Heart left ventricle (tissue), 16 donors: ENCODE measurements at regions of chr13 and their contacts with region 1.

Region 1: GRCh38 chr13:85806553-85807175 is 7.4 kb upstream of the SLITRK6 start:
- DNase-seq: no peak
- ATAC-seq: no peak
- H3K4me3 ChIP-seq: no peak overlapping the region
- H3K27ac ChIP-seq: no peak overlapping the region
- H3K4me1 ChIP-seq: no peaks in the 10 kb centered on the region
- H3K27me3 ChIP-seq: no peaks in the 10 kb centered on the region
- CTCF ChIP-seq: peak; percentile 32 to 68 (median 52)
- POLR2A ChIP-seq: no peak

Region 2: DNA sequence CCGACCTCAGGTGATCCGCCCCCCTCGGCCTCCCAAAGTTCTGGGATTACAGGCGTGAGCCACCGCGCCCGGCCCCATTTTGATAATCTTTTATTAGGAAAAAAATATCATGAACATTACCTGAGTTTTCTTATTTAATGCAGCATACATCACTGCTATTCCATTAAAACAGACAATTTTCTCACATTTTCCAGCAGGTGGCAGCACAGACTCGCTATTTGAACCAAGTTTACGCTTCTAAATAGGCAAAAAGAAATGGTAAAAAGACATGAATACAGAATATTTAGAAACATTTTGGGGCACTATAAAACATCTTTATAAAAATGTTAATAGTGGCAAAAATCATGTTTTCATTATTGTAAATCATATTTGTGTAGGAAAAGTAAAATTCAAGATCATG is 910.5 kb before region 1 on chr13:
- intact Hi-C with region 1: loop called in 6 of 10 experiments (anchors 5 kb)
- DNase-seq: no peak
- ATAC-seq: no peak
- H3K4me3 ChIP-seq: no peak overlapping the region
- H3K27ac ChIP-seq: no peak overlapping the region
- H3K4me1 ChIP-seq: no peaks in the 10 kb centered on the region
- H3K27me3 ChIP-seq: no peaks in the 10 kb centered on the region
- CTCF ChIP-seq: peak; percentile 34 to 68 (median 53)
- POLR2A ChIP-seq: no peak

Region 3: DNA sequence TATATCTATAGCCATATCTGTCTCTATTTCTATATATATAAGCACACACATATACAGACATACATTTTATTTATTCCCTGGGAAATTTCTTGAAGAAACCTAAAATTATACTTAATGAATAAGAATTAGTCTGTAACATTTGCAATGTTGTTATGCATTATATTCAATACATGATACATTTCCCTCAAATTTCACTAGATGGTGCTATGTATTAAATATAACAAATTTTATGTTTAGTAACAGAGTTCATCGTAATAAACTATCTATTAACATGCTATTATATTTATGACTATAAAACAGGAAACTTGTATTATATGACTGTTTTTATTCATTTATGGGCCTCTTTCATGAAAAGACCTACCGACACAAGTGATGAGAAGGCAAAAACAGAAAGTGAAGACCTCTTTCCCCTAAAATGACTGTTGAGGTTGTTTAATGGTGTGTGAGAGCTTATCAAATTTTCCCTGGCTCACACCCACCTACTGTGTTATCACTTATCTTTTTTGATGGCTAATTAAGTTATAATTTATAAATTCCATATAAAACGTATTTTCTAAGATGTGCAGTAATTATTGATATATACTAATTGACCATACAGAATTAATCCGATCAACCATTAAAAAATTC is 889.3 kb before region 1 on chr13:
- intact Hi-C with region 1: loop called in 6 of 10 experiments (anchors 5 to 10 kb)
- DNase-seq: no peak
- ATAC-seq: no peak
- H3K4me3 ChIP-seq: no peak overlapping the region
- H3K27ac ChIP-seq: no peak overlapping the region
- H3K4me1 ChIP-seq: no peaks in the 10 kb centered on the region
- H3K27me3 ChIP-seq: no peaks in the 10 kb centered on the region
- CTCF ChIP-seq: peak in 10 of 12 donors; percentile 21 to 57 (median 38)
- POLR2A ChIP-seq: no peak

Region 4: DNA sequence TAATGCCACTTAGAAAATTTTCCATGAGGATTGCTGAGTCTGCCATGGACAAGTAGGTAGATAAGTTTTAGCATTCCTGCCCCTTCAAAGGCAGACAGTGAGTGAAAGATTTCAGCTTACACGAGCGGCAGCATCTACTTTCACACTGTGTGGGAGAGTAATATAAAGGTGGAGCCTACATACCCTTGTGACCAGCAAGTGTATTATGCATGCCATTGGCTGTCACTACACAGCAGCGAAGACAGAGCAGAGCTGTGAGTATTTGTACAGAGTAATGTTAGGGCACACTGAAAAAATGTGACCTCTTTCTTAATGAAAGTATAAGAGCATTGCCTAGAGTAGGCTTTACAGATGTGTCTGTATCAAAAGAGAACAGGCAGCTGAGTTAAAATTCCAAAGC is 21.5 kb before region 1 on chr13:
- intact Hi-C with region 1: no loop called
- DNase-seq: no peak
- ATAC-seq: no peak
- H3K4me3 ChIP-seq: no peak overlapping the region
- H3K27ac ChIP-seq: no peak overlapping the region
- H3K4me1 ChIP-seq: no peaks in the 10 kb centered on the region
- H3K27me3 ChIP-seq: no peaks in the 10 kb centered on the region
- CTCF ChIP-seq: no peak
- POLR2A ChIP-seq: no peak